GM10248 (cell line): ENCODE measurements at regions of chr3 and their contacts with region 1.

Region 1: DNA sequence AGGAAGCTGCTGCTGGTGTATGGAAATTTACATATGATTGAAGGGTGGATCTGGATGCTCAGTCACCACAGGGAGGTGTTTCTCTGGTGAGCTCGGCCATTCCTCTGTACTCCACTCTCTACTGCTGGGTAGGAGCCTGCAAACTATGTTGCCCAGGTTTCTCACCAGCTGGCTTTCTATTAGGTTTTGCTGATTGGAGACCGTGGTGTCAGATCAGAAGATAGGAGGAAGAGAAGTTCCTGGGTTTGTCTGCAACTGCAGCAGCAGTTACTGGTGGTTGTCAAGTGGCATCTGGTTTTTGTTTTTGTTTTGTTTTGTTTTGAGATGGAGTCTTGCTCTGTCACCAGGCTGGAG is 61.7 kb downstream of the TAMM41 start:
- DNase-seq: peak; percentile 29
- CTCF ChIP-seq: no peak

Region 2: GRCh38 chr3:11757441-11757875 is 27.5 kb before region 1 on chr3:
- CTCF ChIA-PET with region 1: no interaction called
- POLR2A ChIA-PET with region 1: no interaction called
- DNase-seq: no peak
- CTCF ChIP-seq: no peak

Region 3: GRCh38 chr3:11774294-11774877 is 10.6 kb before region 1 on chr3:
- CTCF ChIA-PET with region 1: interaction called, 15 read pairs
- POLR2A ChIA-PET with region 1: no interaction called
- DNase-seq: no peak
- CTCF ChIP-seq: no peak